ENCODE measurements at regions of chr10 and their contacts with region 1.

Region 1: GRCh38 chr10:132593389-132593788 is 55.8 kb downstream of the INPP5A start:
- DNase-seq: no peak
- ATAC-seq: no peak
- H3K4me3 ChIP-seq: no peak overlapping the region
- H3K27ac ChIP-seq: no peak overlapping the region
- H3K4me1 ChIP-seq: peaks cover 52% of the 10 kb centered on the region
- H3K27me3 ChIP-seq: no peaks in the 10 kb centered on the region; a peak in 1 of 5 replicates
- CTCF ChIP-seq: no peak
- EP300 ChIP-seq: no peak
- POLR2A ChIP-seq: no peak
- RAD21 ChIP-seq: no peak

Region 2: GRCh38 chr10:132516771-132517725 is 76.3 kb before region 1 on chr10:
- CTCF ChIA-PET with region 1: no interaction called
- POLR2A ChIA-PET with region 1: interaction called, 14 read pairs
- in situ Hi-C with region 1: no loop called
- intact Hi-C with region 1: loop called (anchors 5 kb)
- DNase-seq: peak; percentile 92
- ATAC-seq: peak; percentile 65
- H3K4me3 ChIP-seq: peak overlapping the region; percentile 48 to 75 (median 62)
- H3K27ac ChIP-seq: peak overlapping the region; percentile 69
- H3K4me1 ChIP-seq: peaks cover 61% of the 10 kb centered on the region
- H3K27me3 ChIP-seq: peaks cover 2 to 25% of the 10 kb centered on the region in 2 experiments; a peak in 4 of 5 replicates
- CTCF ChIP-seq: no peak
- EP300 ChIP-seq: peak in 1 of 2 experiments; percentile 78; a peak in 2 of 4 replicates
- POLR2A ChIP-seq: peak in 1 of 2 experiments; percentile 55; a peak in 2 of 4 replicates
- RAD21 ChIP-seq: peak; percentile 30; the same call in 1 of the 2 replicates

Measured in HepG2 (cell line).